ENCODE measurements at regions of chr12 and their contacts with region 1.

Region 1: DNA sequence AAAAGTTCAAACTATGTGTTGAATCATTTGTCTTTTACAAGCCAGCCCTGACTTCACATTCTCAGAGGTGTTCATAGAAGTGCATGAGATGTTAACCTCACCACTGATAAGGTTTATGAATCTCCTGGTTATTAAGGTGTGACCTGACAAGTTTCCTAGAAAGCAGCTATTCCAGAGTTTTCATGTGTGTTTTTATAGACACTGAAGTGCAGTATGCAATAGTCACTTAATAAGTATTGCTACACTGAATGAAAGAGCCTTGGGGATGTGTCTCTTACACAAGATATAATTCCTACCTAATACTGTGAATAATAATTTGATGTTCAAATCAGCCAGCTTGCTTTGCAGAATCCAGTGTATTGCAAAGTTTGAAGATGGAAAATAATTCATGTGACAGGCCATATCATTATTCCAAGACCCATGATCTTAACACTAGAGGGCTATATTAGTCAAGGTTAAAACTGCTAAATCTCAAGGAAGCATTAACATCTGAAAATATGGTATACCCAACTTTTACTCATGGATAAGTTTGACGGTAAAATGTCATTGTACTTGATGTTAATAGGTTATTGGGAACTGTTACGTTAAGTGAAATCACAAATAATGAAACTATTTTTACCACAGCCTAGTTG is 13.0 kb downstream of the SLC25A3 start:
- DNase-seq: no peak
- ATAC-seq: no peak
- H3K4me3 ChIP-seq: no peak overlapping the region
- H3K27ac ChIP-seq: no peak overlapping the region
- H3K4me1 ChIP-seq: no peaks in the 10 kb centered on the region
- H3K27me3 ChIP-seq: no peaks in the 10 kb centered on the region
- CTCF ChIP-seq: no peak

Region 2: GRCh38 chr12:97921979-97922722 is 684.3 kb before region 1 on chr12:
- CTCF ChIA-PET with region 1: no interaction called
- POLR2A ChIA-PET with region 1: interaction called, 10 read pairs
- in situ Hi-C with region 1: no loop called
- intact Hi-C with region 1: no loop called
- DNase-seq: no peak
- ATAC-seq: no peak
- H3K4me3 ChIP-seq: no peak overlapping the region
- H3K27ac ChIP-seq: no peak overlapping the region
- H3K4me1 ChIP-seq: no peaks in the 10 kb centered on the region
- H3K27me3 ChIP-seq: no peaks in the 10 kb centered on the region
- CTCF ChIP-seq: no peak

Region 3: DNA sequence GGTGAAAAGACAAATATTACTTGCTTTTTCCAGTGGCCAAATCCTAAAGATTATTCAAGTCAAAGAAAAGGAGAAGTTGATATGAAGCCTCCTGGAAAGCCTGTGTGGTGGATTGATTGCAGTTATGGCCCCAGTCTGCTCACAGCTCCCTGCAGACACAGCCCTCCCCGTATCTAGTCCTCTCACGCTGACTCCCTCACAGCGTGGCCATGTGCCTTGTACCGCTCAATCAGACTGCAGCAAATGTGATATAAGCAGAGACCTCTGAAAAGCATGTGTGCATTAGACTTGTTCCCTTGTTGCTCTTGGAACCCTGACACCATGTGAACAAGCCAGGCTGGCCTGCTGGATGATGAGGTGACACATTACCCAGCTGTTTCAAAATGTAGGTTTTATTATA is 643.1 kb after region 1 on chr12:
- CTCF ChIA-PET with region 1: no interaction called
- POLR2A ChIA-PET with region 1: no interaction called
- in situ Hi-C with region 1: no loop called
- intact Hi-C with region 1: no loop called
- DNase-seq: no peak
- ATAC-seq: no peak
- H3K4me3 ChIP-seq: no peak overlapping the region
- H3K27ac ChIP-seq: no peak overlapping the region
- H3K4me1 ChIP-seq: no peaks in the 10 kb centered on the region
- H3K27me3 ChIP-seq: no peaks in the 10 kb centered on the region
- CTCF ChIP-seq: no peak

Measured in Panc1 (cell line).